CD4-positive, alpha-beta T cell (primary cell): ENCODE measurements at regions of chr2 and their contacts with region 1.

Region 1: DNA sequence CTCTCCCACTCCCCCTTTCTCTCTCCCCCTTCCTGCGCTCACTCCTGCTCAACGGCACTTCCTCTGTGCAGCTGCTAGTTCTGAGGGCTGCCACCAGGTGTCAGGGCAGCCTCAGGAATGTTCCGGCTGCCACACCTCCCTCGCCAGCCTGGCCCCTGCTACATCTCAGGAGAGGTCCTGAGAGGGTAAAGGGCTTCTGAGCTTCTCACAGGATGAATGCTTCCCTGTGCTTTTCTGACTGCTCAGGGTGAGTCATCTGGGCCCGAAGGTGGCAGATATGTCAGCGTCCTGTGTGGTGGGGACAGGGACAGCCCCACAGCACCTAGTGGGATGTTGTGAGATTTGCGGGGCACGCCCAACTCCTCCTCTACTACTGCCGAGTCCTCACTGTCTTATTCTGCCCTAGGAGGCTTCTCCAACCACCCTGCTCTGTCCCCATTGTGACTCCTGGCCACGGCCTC is 49.0 kb downstream of the PLEKHB2 start:
- DNase-seq: peak; percentile 41 to 82 (median 56)
- ATAC-seq: peak; percentile 88
- H3K4me3 ChIP-seq: no peak overlapping the region
- H3K4me3 Mint-ChIP-seq: no peak overlapping the region
- H3K27ac ChIP-seq: no peak overlapping the region
- H3K27ac Mint-ChIP-seq: no peak overlapping the region
- H3K4me1 ChIP-seq: peaks cover 20% of the 10 kb centered on the region
- H3K4me1 Mint-ChIP-seq: peaks cover 7% of the 10 kb centered on the region
- H3K27me3 ChIP-seq: no peaks in the 10 kb centered on the region
- H3K27me3 Mint-ChIP-seq: no peaks in the 10 kb centered on the region
- CTCF ChIP-seq: peak; percentile 76

Region 2: DNA sequence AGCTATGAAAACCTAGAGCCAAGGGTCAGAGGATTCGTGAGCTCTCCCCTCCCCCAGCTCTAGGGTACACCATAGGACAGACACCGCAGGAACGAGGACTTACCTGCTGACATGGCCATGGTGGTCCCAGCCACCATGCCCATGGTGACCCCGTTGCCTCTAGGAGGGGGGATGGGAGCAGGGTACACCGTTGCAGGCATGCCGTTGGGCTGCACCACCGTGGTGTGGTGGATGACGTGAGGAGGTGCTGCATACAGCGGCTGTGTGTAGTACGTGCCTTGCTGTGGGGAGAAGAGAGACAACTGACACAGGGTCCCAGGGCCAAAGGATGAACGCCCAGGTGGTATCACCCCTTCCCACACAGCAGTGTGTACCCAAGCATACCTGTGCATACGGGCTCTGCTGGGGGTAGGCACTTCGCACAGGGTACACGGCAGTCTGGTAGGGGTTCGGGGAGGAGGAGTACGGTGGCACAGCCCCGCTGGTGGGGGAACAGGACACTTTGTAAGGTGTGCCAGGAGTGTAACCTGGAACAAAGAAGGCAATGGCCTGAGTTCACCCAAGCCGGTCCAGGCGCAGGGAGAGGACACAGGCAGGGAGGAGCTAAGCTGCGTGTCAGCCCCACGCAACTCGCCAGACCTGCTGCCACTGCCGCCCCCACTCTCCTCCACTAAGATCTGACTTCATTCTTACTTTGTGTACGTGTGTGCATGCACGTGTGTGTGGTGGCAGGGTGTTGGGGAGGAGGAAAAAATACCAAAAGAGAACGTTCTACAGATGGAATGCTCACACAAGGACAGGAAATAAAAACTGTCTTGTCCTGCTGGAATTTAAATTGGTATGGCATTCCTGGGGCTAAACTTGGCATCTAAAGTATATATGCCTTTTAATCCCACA is 98.7 kb before region 1 on chr2:
- CTCF ChIA-PET with region 1: no interaction called
- POLR2A ChIA-PET with region 1: no interaction called
- intact Hi-C with region 1: no loop called
- DNase-seq: no peak
- ATAC-seq: no peak
- H3K4me3 ChIP-seq: no peak overlapping the region
- H3K4me3 Mint-ChIP-seq: no peak overlapping the region
- H3K27ac ChIP-seq: no peak overlapping the region
- H3K27ac Mint-ChIP-seq: no peak overlapping the region
- H3K4me1 ChIP-seq: no peaks in the 10 kb centered on the region
- H3K4me1 Mint-ChIP-seq: peaks cover 37% of the 10 kb centered on the region
- H3K27me3 ChIP-seq: no peaks in the 10 kb centered on the region
- H3K27me3 Mint-ChIP-seq: no peaks in the 10 kb centered on the region
- CTCF ChIP-seq: no peak

Region 3: DNA sequence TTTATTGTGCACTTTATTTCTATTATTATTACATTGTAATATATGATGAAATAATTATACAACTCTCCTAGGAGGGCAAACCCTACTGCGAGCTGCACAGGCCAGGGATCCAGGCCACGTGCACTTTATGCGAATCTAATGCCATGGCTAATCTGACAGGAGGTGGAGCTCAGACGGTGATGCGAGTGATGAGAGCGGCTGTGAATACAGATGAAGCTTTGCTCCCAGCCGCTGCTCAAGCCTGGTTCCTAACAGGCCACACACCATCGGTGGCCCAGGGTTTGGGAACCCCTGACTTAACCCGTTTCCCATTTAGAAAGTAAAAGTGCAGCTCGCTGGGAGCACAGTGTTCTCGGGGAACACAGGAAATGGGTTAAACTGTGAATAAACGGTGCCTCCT is 250.7 kb after region 1 on chr2:
- CTCF ChIA-PET with region 1: no interaction called
- POLR2A ChIA-PET with region 1: no interaction called
- intact Hi-C with region 1: loop called in 1 of 2 experiments (anchors 5 kb)
- DNase-seq: no peak
- ATAC-seq: no peak
- H3K4me3 ChIP-seq: no peak overlapping the region
- H3K4me3 Mint-ChIP-seq: no peak overlapping the region
- H3K27ac ChIP-seq: no peak overlapping the region
- H3K27ac Mint-ChIP-seq: no peak overlapping the region
- H3K4me1 ChIP-seq: no peaks in the 10 kb centered on the region
- H3K4me1 Mint-ChIP-seq: no peaks in the 10 kb centered on the region
- H3K27me3 ChIP-seq: peaks cover 0 to 2% of the 10 kb centered on the region in 2 experiments
- H3K27me3 Mint-ChIP-seq: peaks cover 48% of the 10 kb centered on the region
- CTCF ChIP-seq: no peak

Region 4: GRCh38 chr2:131673392-131674173 is 519.5 kb after region 1 on chr2:
- CTCF ChIA-PET with region 1: interaction called, 3 read pairs
- POLR2A ChIA-PET with region 1: no interaction called
- intact Hi-C with region 1: loop called (anchors 2 to 5 kb)
- DNase-seq: peak in 12 of 14 experiments; percentile 40 to 74 (median 52)
- ATAC-seq: no peak
- H3K4me3 ChIP-seq: peak overlapping the region; percentile 44
- H3K4me3 Mint-ChIP-seq: peak overlapping the region; percentile 69
- H3K27ac ChIP-seq: no peak overlapping the region
- H3K27ac Mint-ChIP-seq: no peak overlapping the region
- H3K4me1 ChIP-seq: peaks cover 21% of the 10 kb centered on the region
- H3K4me1 Mint-ChIP-seq: peaks cover 13% of the 10 kb centered on the region
- H3K27me3 ChIP-seq: peaks cover 24 to 34% of the 10 kb centered on the region in 2 experiments
- H3K27me3 Mint-ChIP-seq: peaks cover 62% of the 10 kb centered on the region
- CTCF ChIP-seq: peak; percentile 80

Region 5: GRCh38 chr2:131801210-131801744 is 647.2 kb after region 1 on chr2:
- CTCF ChIA-PET with region 1: interaction called, 5 read pairs
- POLR2A ChIA-PET with region 1: no interaction called
- intact Hi-C with region 1: loop called in 1 of 2 experiments (anchors 5 kb)
- DNase-seq: peak in 1 of 14 experiments; percentile 34
- ATAC-seq: no peak
- H3K4me3 ChIP-seq: no peak overlapping the region
- H3K4me3 Mint-ChIP-seq: no peak overlapping the region
- H3K27ac ChIP-seq: no peak overlapping the region
- H3K27ac Mint-ChIP-seq: no peak overlapping the region
- H3K4me1 ChIP-seq: peaks cover 7% of the 10 kb centered on the region
- H3K4me1 Mint-ChIP-seq: no peaks in the 10 kb centered on the region
- H3K27me3 ChIP-seq: no peaks in the 10 kb centered on the region
- H3K27me3 Mint-ChIP-seq: peaks cover 10% of the 10 kb centered on the region
- CTCF ChIP-seq: no peak